Left cardiac atrium (tissue), 4 donors: ENCODE measurements at regions of chr1 and their contacts with region 1.

Region 1: DNA sequence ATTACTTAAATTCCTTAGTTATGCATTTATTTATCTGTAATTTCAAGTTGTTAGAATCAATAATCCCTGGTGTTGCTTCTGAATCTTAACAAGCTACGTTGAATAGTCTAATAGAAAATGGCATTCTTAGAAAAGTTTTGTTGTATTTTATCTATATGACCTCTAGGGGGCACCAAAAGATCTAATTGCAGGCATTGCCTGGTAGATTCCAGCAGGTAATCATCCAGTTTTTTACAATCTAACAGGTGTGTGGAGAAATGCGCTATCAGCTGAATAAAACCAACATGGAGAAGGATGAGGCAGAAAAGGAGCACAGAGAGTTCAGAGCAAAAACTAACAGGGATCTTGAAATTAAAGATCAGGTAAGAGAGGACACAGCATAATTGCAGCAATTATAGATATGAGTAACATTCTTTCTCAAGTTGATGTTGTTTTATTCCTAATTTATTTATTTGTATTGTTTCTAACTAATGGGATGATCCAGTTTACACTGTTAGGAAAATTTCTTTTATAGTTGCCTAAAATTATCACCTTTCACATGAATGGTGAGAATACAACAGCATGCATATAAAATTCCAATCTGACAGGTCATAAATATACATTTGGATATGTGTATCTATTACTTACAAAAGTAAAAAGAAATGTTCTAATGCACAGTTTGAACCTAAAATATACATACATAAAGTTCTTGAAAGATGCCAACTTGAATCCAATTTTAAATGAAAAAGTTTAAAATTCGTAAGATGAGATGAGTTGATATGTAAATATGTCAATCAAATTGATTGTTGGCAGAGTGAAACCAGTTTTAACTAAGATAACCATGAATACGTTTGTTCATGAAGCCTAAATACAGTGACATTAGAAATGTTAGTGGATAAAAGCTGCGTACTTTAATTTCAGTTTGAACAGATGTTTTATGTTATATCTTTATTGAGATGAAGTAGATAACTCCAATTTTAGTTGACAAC is 88.4 kb downstream of the SDCCAG8 start:
- DNase-seq: no peak
- ATAC-seq: peak in 1 of 2 donors; percentile 38

Region 2: GRCh38 chr1:243482141-243483022 is 138.1 kb after region 1 on chr1:
- intact Hi-C with region 1: no loop called
- DNase-seq: no peak
- ATAC-seq: peak; percentile 74 to 83

Region 3: DNA sequence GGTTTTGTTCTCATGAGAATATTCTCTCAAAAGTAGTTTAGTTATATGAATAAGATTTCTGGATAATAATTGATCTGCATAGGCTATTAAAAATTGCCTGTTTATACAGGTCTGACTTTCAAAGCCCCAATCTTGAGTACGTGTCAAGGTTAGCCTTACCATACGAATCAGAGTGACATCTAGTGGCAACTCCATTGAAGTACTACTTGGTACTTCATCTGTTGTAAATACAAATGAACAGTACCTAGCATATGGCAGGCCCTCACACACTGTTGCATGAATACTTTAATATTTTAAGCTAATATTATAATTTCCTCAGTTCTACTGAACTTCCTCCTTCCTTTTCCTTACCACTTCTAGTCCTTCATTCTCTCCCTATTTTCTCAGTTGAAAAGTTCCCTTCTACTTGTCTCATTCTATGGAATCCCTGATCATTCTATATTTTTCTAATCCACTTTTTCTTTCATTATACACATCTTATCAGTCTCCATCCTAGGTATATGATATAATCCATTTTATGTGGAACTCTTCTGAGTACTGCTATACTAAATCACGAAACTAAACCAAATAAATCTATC is 404.5 kb after region 1 on chr1:
- intact Hi-C with region 1: loop called in 1 of 2 experiments (anchors 5 kb)
- DNase-seq: no peak
- ATAC-seq: peak; percentile 78 to 94